Aorta (tissue), 5 donors: ENCODE measurements at regions of chr6 and their contacts with region 1.

Region 1: DNA sequence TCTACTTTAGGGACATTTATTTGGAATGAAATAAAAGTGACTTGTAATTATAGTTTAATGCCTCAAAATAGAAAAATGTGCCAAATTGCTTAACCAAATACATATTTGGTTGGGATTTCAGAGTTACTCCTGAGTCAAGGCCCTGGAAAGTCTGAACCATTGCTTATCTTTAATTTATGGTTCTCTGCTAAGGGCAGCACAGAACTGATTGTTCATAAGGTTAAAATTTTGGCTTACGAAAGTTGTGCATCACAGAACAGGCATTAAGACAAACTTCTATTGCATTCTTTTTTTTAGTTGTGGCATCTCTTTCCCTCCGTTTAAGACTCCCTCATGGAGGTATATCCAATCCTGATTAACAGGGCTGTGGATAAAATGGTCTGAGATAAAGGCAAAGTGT is 92.2 kb upstream of the TENT5A start:
- DNase-seq: no peak
- ATAC-seq: peak; percentile 75
- H3K4me3 ChIP-seq: no peak overlapping the region
- H3K27ac ChIP-seq: no peak overlapping the region
- H3K4me1 ChIP-seq: peaks cover 7 to 8% of the 10 kb centered on the region in 2 donors
- H3K27me3 ChIP-seq: no peaks in the 10 kb centered on the region

Region 2: GRCh38 chr6:81865712-81866111 is 21.0 kb after region 1 on chr6:
- intact Hi-C with region 1: no loop called
- DNase-seq: no peak
- ATAC-seq: no peak
- H3K4me3 ChIP-seq: no peak overlapping the region
- H3K27ac ChIP-seq: peak overlapping the region in 1 of 2 donors; percentile 25
- H3K4me1 ChIP-seq: peaks cover 5 to 13% of the 10 kb centered on the region in 2 donors
- H3K27me3 ChIP-seq: no peaks in the 10 kb centered on the region

Region 3: DNA sequence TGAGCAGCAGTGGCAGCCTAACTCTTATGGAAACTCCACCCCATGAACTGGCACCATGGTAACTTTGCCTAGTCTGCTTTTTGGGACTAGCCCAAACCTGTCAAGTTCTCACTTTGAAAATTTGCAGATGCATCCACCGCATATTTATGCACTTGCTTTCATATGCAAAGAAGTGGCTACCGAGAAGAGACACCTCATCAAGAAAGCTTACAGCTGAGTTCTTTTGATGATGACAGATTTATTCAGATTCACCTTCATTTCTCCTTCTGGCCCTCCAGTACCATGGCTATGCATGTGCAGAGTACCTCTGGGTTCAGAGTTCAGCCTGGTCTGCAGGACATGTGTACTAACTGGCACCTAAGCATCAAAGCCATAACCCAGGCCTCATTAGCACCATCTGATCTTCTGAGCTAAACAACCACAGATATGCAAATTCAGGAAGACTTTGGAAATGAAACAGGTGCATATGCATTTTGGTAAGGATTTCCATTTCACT is 62.1 kb after region 1 on chr6:
- intact Hi-C with region 1: loop called in 1 of 2 experiments (anchors 10 kb)
- DNase-seq: no peak
- ATAC-seq: no peak
- H3K4me3 ChIP-seq: no peak overlapping the region
- H3K27ac ChIP-seq: no peak overlapping the region
- H3K4me1 ChIP-seq: peaks cover 0 to 6% of the 10 kb centered on the region in 2 donors
- H3K27me3 ChIP-seq: no peaks in the 10 kb centered on the region

Region 4: DNA sequence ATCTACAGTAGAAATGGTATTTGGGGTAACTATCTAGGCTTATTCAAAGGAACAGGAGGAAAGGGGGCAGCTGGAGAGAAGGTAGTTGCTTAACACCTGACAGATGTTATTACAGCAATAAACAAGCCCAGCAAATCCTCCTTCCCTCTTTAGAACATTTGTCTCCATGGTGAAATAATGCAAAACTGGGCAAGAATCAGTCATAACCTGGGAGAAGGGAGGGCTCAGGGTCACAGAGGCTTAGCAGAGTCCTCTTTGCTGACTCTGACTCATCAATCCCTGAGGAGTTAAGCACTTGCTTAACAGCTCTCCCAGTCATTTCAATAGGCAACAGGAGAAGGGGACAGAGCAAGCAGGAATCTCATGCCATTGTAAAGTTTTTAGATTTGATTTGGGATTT is 172.6 kb after region 1 on chr6:
- intact Hi-C with region 1: loop called in 1 of 2 experiments (anchors 10 kb)
- DNase-seq: peak in 1 of 2 donors; percentile 57
- ATAC-seq: peak; percentile 87
- H3K4me3 ChIP-seq: peak overlapping the region in 1 of 2 donors; percentile 18
- H3K27ac ChIP-seq: peak overlapping the region; percentile 52 to 94
- H3K4me1 ChIP-seq: peaks cover 18 to 21% of the 10 kb centered on the region in 2 donors
- H3K27me3 ChIP-seq: no peaks in the 10 kb centered on the region